ENCODE measurements at regions of chr2 and their contacts with region 1.

Region 1: DNA sequence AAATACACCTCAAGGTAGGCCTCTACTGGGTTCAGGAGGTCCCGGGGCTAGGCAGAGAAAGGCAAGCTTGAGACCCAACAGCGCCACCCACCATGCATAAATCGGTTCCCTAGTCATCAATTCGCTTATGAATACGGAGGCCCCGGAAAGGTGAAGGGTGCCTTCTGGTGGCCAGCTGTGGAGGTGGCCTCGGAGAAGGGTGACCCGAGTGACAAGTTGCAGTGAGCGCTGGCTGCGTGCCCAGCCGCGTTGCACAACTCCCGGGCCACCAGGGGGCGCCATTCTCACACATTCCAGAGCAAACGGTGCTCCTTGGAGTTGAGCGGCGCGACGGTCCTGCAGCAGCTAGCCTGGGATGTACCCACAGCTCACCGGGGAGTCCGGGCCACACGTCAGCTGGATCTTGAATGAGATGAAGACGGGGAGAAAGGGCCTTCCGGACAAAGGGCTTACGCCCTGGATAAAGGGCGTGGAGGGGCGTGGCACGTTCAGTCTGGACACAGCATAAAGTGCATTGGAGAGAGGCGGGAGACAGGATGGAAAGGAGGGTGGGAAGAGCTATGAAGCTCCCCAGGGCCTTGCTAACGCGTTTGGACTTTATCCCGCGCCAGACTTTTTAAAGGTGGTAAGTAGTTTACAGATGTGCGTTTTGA is 20.4 kb downstream of the TMSB10 start:
- DNase-seq: peak; percentile 87
- H3K4me3 ChIP-seq: peak overlapping the region; percentile 51 to 60
- H3K27ac ChIP-seq: peak overlapping the region in 1 of 2 experiments; percentile 36; a peak in 2 of 4 replicates
- H3K4me1 ChIP-seq: peaks cover 5 to 13% of the 10 kb centered on the region in 2 experiments; a peak in 2 of 4 replicates
- H3K27me3 ChIP-seq: no peaks in the 10 kb centered on the region
- CTCF ChIP-seq: peak; percentile 96
- EP300 ChIP-seq: no peak
- RAD21 ChIP-seq: peak; percentile 70

Region 2: GRCh38 chr2:84832772-84833461 is 92.9 kb before region 1 on chr2:
- CTCF ChIA-PET with region 1: no interaction called
- POLR2A ChIA-PET with region 1: no interaction called
- DNase-seq: no peak
- H3K4me3 ChIP-seq: no peak overlapping the region
- H3K27ac ChIP-seq: no peak overlapping the region
- H3K4me1 ChIP-seq: no peaks in the 10 kb centered on the region
- H3K27me3 ChIP-seq: peaks cover 8% of the 10 kb centered on the region; the same call in 1 of the 2 replicates
- CTCF ChIP-seq: no peak
- EP300 ChIP-seq: no peak
- RAD21 ChIP-seq: no peak

Region 3: DNA sequence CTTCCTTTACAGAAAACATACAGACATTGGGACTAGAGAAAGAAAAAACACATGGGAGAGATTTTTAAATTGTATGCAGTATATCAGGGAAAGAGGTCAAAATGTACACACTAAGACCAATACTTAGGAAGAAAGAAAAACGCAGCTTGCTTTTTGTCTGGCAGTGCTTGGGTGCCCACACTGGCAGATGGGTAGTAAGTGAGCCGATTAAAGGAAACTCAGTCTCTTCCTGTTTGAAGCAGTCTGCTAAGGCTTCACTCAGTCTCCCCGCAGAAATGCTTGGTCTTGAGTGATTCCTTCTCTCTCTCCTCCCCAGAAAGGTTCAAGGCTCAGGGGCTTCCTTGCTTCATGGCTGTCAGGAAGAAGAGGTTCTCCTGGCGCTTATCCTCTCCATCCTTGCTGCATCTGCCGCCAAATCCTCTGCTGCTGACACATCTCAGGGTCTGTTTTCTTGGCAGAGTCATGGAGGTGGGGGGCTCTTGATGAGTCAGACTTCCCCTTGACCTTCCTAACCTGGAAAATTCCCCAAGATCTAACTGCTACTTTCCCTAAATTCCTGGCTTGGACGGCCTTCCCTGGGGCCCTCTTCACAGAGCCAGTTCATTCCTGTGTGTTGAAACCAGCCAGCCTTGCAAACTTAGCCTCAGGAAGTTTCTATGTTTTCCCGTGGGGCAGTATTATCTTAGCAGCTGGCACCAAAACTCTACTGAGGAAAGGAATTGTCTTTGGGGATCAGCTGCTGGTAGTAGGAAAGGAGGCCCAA is 30.9 kb before region 1 on chr2:
- CTCF ChIA-PET with region 1: interaction called, 10 read pairs
- POLR2A ChIA-PET with region 1: no interaction called
- DNase-seq: no peak
- H3K4me3 ChIP-seq: no peak overlapping the region
- H3K27ac ChIP-seq: peak overlapping the region in 1 of 2 experiments; percentile 71; a peak in 2 of 4 replicates
- H3K4me1 ChIP-seq: peaks cover 0 to 46% of the 10 kb centered on the region in 2 experiments; a peak in 3 of 4 replicates
- H3K27me3 ChIP-seq: no peaks in the 10 kb centered on the region
- CTCF ChIP-seq: no peak
- EP300 ChIP-seq: peak in 1 of 2 experiments; percentile 51; a peak in 1 of 4 replicates
- RAD21 ChIP-seq: no peak

Region 4: DNA sequence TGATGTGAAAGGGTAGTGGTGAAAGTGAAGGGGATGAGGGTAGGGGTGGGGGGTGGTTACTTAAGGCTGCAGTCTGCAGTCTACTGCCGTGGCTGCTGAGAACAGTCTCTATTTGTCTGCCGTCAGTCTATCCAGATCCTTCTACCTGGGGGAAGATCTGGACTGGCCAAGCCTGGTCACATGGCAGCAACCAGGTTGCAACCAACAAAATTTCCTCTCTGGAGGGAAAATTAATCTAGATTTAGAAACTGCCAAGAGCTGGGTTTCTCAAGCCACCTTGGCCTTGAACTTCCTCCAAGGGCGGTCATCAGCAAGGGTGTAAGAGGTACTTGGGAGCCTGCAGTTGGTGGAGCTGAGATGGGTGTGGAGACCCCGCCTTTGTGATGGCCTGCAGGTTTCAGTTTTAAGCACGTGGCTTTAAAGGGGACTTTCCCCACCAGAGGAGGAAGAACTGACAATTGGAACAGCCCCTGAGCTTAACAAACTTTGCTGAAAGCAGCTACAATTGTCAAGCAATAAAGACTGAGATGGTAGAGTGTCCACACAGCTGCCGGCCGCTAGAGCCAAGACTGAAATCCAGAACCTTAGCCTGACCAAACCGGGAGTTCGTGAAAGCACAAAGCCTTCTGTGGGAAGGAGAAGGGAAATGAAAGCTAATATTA is 13.7 kb after region 1 on chr2:
- CTCF ChIA-PET with region 1: interaction called, 78 read pairs
- POLR2A ChIA-PET with region 1: no interaction called
- DNase-seq: no peak
- H3K4me3 ChIP-seq: no peak overlapping the region
- H3K27ac ChIP-seq: no peak overlapping the region
- H3K4me1 ChIP-seq: no peaks in the 10 kb centered on the region
- H3K27me3 ChIP-seq: no peaks in the 10 kb centered on the region
- CTCF ChIP-seq: no peak
- EP300 ChIP-seq: no peak
- RAD21 ChIP-seq: no peak

Region 5: DNA sequence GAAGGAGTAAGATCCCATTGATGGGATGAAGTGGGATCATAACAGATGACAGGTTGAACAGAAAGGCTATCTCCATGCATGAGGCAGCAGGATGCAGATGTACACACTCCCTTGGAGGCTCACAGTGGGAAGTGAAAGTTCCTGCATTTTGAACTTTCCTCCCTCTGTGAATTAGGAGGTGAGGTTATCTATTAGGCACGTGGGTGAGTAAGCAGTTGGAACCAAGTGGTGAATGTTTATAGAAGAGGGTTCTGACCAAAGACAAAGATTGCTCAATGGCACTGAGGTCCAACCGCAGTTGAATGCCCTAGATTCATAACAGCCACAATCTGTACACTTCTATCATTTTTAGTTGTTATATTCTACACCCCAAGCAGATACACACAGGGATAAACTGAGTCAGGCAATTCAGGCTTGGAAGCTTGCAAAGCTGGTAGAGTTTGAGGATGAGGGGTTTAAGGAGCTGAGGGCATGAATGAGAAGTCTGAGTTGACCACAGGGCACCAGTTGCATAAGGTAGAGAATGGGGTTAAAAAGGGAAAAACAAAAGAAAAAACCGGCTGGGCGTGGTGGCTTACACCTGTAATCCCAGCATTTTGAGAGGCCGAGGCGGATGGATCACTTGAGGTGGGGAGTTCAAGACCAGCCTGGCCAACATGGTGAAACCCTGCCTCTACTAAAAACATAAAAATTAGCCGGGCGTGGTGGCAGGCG is 38.0 kb after region 1 on chr2:
- CTCF ChIA-PET with region 1: interaction called, 16 read pairs
- POLR2A ChIA-PET with region 1: no interaction called
- DNase-seq: no peak
- H3K4me3 ChIP-seq: no peak overlapping the region
- H3K27ac ChIP-seq: no peak overlapping the region
- H3K4me1 ChIP-seq: peaks cover 0 to 28% of the 10 kb centered on the region in 2 experiments; a peak in 3 of 4 replicates
- H3K27me3 ChIP-seq: no peaks in the 10 kb centered on the region
- CTCF ChIP-seq: no peak
- EP300 ChIP-seq: no peak
- RAD21 ChIP-seq: no peak

Region 6: GRCh38 chr2:85017411-85018048 is 91.7 kb after region 1 on chr2:
- CTCF ChIA-PET with region 1: interaction called, 23 read pairs
- POLR2A ChIA-PET with region 1: no interaction called
- DNase-seq: peak; percentile 21
- H3K4me3 ChIP-seq: no peak overlapping the region; a peak in 1 of 4 replicates
- H3K27ac ChIP-seq: peak overlapping the region; percentile 23 to 35; a peak in 3 of 4 replicates
- H3K4me1 ChIP-seq: peaks cover 0 to 52% of the 10 kb centered on the region in 2 experiments; a peak in 3 of 4 replicates
- H3K27me3 ChIP-seq: no peaks in the 10 kb centered on the region
- CTCF ChIP-seq: peak; percentile 68
- EP300 ChIP-seq: no peak
- RAD21 ChIP-seq: peak; percentile 25; the same call in 1 of the 2 replicates

Region 7: GRCh38 chr2:85066874-85067351 is 141.1 kb after region 1 on chr2:
- CTCF ChIA-PET with region 1: interaction called, 23 read pairs
- POLR2A ChIA-PET with region 1: no interaction called
- DNase-seq: peak; percentile 75
- H3K4me3 ChIP-seq: peak overlapping the region; percentile 7 to 24; a peak in 3 of 4 replicates
- H3K27ac ChIP-seq: no peak overlapping the region
- H3K4me1 ChIP-seq: peaks cover 0 to 16% of the 10 kb centered on the region in 2 experiments; a peak in 1 of 4 replicates
- H3K27me3 ChIP-seq: no peaks in the 10 kb centered on the region
- CTCF ChIP-seq: peak; percentile 91
- EP300 ChIP-seq: peak in 1 of 2 experiments; percentile 25; a peak in 1 of 4 replicates
- RAD21 ChIP-seq: peak; percentile 93

Region 8: GRCh38 chr2:85181134-85181631 is 255.3 kb after region 1 on chr2:
- CTCF ChIA-PET with region 1: no interaction called
- POLR2A ChIA-PET with region 1: no interaction called
- DNase-seq: no peak
- H3K4me3 ChIP-seq: no peak overlapping the region
- H3K27ac ChIP-seq: no peak overlapping the region
- H3K4me1 ChIP-seq: no peaks in the 10 kb centered on the region; a peak in 2 of 4 replicates
- H3K27me3 ChIP-seq: no peaks in the 10 kb centered on the region
- CTCF ChIP-seq: 0 out of 2 replicates have a peak, but pooled peaks have one; percentile 9
- EP300 ChIP-seq: no peak
- RAD21 ChIP-seq: 0 out of 2 replicates have a peak, but pooled peaks have one; percentile 3

Region 9: GRCh38 chr2:85243101-85244072 is 317.5 kb after region 1 on chr2:
- CTCF ChIA-PET with region 1: no interaction called
- POLR2A ChIA-PET with region 1: no interaction called
- DNase-seq: peak; percentile 66
- H3K4me3 ChIP-seq: no peak overlapping the region
- H3K27ac ChIP-seq: no peak overlapping the region
- H3K4me1 ChIP-seq: peaks cover 23 to 26% of the 10 kb centered on the region in 2 experiments
- H3K27me3 ChIP-seq: no peaks in the 10 kb centered on the region
- CTCF ChIP-seq: peak; percentile 52
- EP300 ChIP-seq: no peak
- RAD21 ChIP-seq: peak; percentile 64